IMR-90 (cell line): ENCODE measurements at regions of chrX and their contacts with region 1.

Region 1: GRCh38 chrX:151151665-151152267 is 24.6 kb upstream of the GPR50 start:
- DNase-seq: peak; percentile 54
- ATAC-seq: peak; percentile 72
- H3K4me3 ChIP-seq: no peak overlapping the region
- H3K27ac ChIP-seq: no peak overlapping the region
- H3K4me1 ChIP-seq: no peaks in the 10 kb centered on the region
- H3K27me3 ChIP-seq: no peaks in the 10 kb centered on the region
- CTCF ChIP-seq: peak; percentile 79
- POLR2A ChIP-seq: no peak
- RAD21 ChIP-seq: peak; percentile 82

Region 2: DNA sequence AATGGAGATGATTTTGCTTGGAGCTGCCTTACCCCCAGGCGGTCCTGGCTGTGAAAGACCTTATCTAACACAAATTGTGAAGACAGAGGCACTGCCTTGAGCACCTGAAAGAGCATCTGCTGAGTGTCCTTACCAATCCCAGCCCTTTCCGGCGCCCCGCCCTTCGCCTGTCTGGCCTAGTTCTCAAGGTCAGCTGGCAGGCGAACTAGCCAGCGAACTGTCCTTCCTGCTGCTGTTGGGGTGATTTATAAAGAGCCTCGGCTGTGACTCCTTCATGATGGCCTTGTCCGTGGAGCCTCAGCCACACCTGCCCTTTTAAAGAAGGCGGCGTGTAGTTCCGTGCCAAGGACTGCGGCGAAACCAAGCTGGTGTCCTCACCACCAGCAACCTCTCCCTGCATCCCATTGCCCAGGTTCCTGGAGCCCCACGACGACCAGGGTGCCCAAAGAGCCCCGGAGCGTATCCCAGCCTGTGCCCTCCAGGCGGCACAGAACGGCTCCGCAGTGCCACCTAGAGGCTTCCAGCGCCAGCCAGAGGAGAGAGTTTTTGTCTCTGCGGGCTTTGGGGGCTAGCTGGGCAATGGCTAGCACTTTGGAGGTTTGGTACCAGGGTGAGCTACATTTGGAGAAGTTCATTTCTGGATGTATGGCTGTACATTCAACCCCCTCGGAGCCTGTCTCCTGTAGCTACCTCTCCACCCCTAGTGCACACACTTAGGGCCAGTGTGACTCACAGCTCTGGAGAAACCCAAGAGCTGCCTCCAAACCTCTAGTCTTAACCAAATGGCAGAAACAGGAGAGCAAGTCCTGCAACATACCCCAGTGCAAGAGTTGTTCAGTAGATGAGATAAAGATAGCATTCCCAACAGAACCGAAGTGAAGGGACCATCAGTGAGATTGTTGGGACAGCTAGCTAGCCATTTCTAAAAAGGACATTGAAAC is 208.4 kb after region 1 on chrX:
- CTCF ChIA-PET with region 1: no interaction called
- POLR2A ChIA-PET with region 1: no interaction called
- dilution Hi-C with region 1: no loop called
- in situ Hi-C with region 1: no loop called
- intact Hi-C with region 1: loop called (anchors 2 kb)
- DNase-seq: no peak
- ATAC-seq: peak; percentile 74
- H3K4me3 ChIP-seq: no peak overlapping the region
- H3K27ac ChIP-seq: no peak overlapping the region
- H3K4me1 ChIP-seq: no peaks in the 10 kb centered on the region
- H3K27me3 ChIP-seq: no peaks in the 10 kb centered on the region
- CTCF ChIP-seq: peak; percentile 45
- POLR2A ChIP-seq: no peak
- RAD21 ChIP-seq: peak; percentile 33; the same call in 1 of the 2 replicates

Region 3: GRCh38 chrX:151680805-151681204 is 529.0 kb after region 1 on chrX:
- CTCF ChIA-PET with region 1: no interaction called
- POLR2A ChIA-PET with region 1: no interaction called
- dilution Hi-C with region 1: no loop called
- in situ Hi-C with region 1: loop called (anchors 25 kb)
- intact Hi-C with region 1: no loop called
- DNase-seq: peak; percentile 2
- ATAC-seq: no peak
- H3K4me3 ChIP-seq: no peak overlapping the region
- H3K27ac ChIP-seq: no peak overlapping the region
- H3K4me1 ChIP-seq: no peaks in the 10 kb centered on the region
- H3K27me3 ChIP-seq: no peaks in the 10 kb centered on the region
- CTCF ChIP-seq: peak; percentile 40
- POLR2A ChIP-seq: no peak
- RAD21 ChIP-seq: peak; percentile 44; the same call in 1 of the 2 replicates

Region 4: GRCh38 chrX:151722241-151722846 is 570.6 kb after region 1 on chrX:
- CTCF ChIA-PET with region 1: no interaction called
- POLR2A ChIA-PET with region 1: no interaction called
- dilution Hi-C with region 1: no loop called
- in situ Hi-C with region 1: no loop called
- intact Hi-C with region 1: loop called (anchors 5 kb)
- DNase-seq: no peak
- ATAC-seq: no peak
- H3K4me3 ChIP-seq: no peak overlapping the region
- H3K27ac ChIP-seq: no peak overlapping the region
- H3K4me1 ChIP-seq: no peaks in the 10 kb centered on the region
- H3K27me3 ChIP-seq: no peaks in the 10 kb centered on the region
- CTCF ChIP-seq: peak; percentile 31; the same call in 1 of the 2 replicates
- POLR2A ChIP-seq: no peak
- RAD21 ChIP-seq: no peak

Region 5: DNA sequence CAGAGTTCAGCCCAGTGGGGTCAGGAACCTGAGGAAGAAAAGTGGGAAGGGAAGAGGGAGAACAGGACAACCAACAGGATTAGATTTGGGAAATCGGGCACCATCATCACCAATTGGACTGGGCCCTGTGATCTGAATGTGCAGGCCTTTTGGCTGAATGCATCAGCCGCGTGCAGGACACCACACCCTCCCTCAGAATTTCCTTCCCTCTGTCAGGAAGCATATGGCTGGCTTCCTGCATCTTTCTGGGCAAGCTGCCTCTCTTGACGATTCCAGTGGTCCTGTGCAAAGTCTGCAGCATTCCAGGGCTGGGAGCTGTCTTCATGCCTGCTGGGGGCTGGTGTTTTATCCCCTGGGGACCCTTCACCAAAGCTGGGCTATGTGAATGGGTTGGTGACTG is 777.4 kb after region 1 on chrX:
- CTCF ChIA-PET with region 1: no interaction called
- POLR2A ChIA-PET with region 1: no interaction called
- dilution Hi-C with region 1: no loop called
- in situ Hi-C with region 1: no loop called
- intact Hi-C with region 1: no loop called
- DNase-seq: no peak
- ATAC-seq: no peak
- H3K4me3 ChIP-seq: no peak overlapping the region
- H3K27ac ChIP-seq: no peak overlapping the region
- H3K4me1 ChIP-seq: no peaks in the 10 kb centered on the region
- H3K27me3 ChIP-seq: no peaks in the 10 kb centered on the region
- CTCF ChIP-seq: no peak
- POLR2A ChIP-seq: no peak
- RAD21 ChIP-seq: no peak

Region 6: DNA sequence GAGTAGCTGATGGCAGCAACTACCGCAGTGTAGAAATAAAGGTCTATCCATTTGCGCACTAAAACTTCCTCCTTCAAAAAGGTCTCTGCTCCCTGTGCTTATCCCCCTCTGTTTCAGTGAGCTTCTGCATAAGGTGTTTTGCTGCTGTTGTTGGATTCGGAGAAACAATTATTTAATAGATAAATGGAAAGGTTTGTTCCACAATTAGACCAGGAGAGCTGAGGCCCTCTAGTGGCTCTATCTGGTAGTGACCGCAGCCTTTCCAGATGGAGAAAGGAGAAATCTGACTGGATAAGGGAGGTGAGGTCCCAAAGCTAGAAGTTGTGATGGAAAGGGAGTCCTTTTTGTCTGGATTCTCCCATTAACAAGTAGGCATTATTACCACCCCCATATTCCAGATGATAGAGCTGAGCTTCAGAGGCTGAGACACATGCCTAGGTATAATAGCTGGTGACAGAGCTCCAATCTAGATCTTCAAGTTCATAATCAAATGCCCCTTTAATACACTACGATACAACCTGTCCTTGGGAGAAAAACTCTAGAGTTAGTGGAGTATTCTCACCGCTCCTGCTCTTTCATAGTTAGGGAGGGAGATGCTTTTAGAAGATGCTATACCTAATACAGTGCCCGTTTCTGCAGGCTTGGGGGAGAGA is 1480.8 kb after region 1 on chrX:
- CTCF ChIA-PET with region 1: interaction called, 3 read pairs
- POLR2A ChIA-PET with region 1: no interaction called
- dilution Hi-C with region 1: no loop called
- in situ Hi-C with region 1: loop called (anchors 10 kb)
- intact Hi-C with region 1: loop called (anchors 1 kb)
- DNase-seq: peak; percentile 24
- ATAC-seq: peak; percentile 70; the same call in 1 of the 2 replicates
- H3K4me3 ChIP-seq: no peak overlapping the region
- H3K27ac ChIP-seq: no peak overlapping the region
- H3K4me1 ChIP-seq: no peaks in the 10 kb centered on the region
- H3K27me3 ChIP-seq: no peaks in the 10 kb centered on the region
- CTCF ChIP-seq: peak; percentile 71
- POLR2A ChIP-seq: no peak
- RAD21 ChIP-seq: peak; percentile 60

Region 7: DNA sequence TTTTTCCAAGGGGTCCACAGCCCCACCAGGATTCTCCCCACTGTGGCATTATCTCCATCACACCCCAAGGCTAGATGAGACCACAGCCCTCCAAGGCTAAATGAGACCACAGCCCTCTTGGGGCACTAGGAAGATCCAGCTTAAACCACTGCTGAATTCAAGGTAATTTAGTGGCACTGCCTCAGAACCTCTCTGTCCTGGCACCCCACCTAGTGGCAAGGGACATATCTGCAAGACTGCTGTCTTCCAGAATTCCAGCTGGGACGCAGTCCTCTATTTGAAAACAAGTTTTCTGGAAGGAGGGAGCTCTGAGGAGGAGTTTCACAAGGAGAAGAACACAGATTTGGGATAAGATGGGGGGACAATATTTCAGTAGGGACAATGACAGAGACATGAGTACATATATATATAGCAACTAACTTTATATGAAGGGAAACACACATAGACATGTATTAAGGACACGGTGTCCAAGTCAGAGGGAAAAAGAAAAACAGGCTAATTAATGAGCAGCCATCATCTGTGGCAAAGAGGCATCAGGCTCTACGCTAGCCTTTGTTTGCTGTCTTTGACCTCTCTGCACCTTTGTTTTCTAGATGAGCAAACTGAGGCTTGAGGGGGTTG is 1669.5 kb after region 1 on chrX:
- CTCF ChIA-PET with region 1: no interaction called
- POLR2A ChIA-PET with region 1: no interaction called
- dilution Hi-C with region 1: no loop called
- in situ Hi-C with region 1: loop called (anchors 25 kb)
- intact Hi-C with region 1: loop called (anchors 1 kb)
- DNase-seq: peak; percentile 32
- ATAC-seq: peak; percentile 38; the same call in 1 of the 2 replicates
- H3K4me3 ChIP-seq: no peak overlapping the region
- H3K27ac ChIP-seq: no peak overlapping the region
- H3K4me1 ChIP-seq: peaks cover 4% of the 10 kb centered on the region; the same call in 1 of the 2 replicates
- H3K27me3 ChIP-seq: no peaks in the 10 kb centered on the region
- CTCF ChIP-seq: peak; percentile 51
- POLR2A ChIP-seq: no peak
- RAD21 ChIP-seq: peak; percentile 36; the same call in 1 of the 2 replicates